ENCODE measurements at regions of chr12 and their contacts with region 1.

Region 1: DNA sequence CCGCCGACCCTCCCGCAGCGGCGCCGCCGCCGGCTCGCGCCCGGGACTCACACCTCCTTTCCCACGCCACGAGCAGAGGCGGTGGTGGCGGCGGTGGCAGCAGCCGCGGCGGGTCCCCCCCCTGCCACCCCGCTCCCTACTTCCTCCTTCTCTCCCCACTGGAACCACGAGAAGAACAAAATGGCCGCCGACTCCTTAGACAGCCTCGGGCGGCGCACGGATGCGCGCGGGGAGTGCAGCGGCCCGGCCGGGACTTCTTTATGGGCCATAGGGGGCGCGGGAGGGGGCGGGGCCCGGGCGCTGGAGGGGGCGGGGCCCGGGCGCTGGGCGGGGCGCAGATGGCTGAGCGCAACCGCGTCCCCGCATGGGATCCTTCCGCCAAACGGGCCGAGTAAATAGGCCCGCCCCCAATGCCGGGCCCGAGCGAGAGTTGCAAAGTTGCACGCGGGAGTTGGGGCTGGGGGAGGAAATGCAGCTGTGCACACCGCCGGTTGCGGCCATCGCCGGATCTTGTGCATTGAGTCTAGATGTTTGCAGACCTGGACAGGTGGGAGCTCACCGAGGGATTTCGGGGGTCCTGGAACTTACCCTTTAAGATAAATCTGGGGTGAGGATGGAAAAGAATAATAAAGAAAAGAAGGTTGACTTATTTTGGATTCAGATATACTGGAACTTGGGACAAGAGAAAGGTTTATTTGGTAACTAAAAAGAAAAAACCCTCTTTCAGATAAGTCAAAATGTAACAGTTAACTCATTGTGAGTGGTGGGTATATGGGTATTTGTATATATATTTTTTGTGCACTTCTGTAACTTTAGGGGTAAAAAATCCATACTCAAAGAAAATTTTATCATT is at the start of gene PPP1CC:
- DNase-seq: peak; percentile 90
- H3K4me3 ChIP-seq: peak within 1 kb of the TSS; percentile 94 to 97 (median 94)
- H3K27ac ChIP-seq: peak within 1 kb of the TSS; percentile 78
- H3K4me1 ChIP-seq: peaks cover 42% of the 10 kb centered on the region
- H3K27me3 ChIP-seq: no peaks in the 10 kb centered on the region
- CTCF ChIP-seq: no peak
- POLR2A ChIP-seq: peak; percentile 80
- total RNA-seq, gene PPP1CC: 139 and 140 TPM in 2 replicates

Region 2: GRCh38 chr12:110449799-110450497 is 293.0 kb before region 1 on chr12 and contains the start of gene ARPC3:
- CTCF ChIA-PET with region 1: no interaction called
- POLR2A ChIA-PET with region 1: no interaction called
- dilution Hi-C with region 1: no loop called
- intact Hi-C with region 1: loop called (anchors 5 kb)
- DNase-seq: peak; percentile 92
- H3K4me3 ChIP-seq: peak within 1 kb of the TSS; percentile 59 to 85 (median 83)
- H3K27ac ChIP-seq: peak within 1 kb of the TSS; percentile 89
- H3K4me1 ChIP-seq: peaks cover 5% of the 10 kb centered on the region
- H3K27me3 ChIP-seq: no peaks in the 10 kb centered on the region
- CTCF ChIP-seq: peak; percentile 87 to 89
- POLR2A ChIP-seq: peak; percentile 86
- total RNA-seq, gene ARPC3: 304 and 308 TPM in 2 replicates

Region 3: GRCh38 chr12:110501752-110502738 is 240.9 kb before region 1 on chr12 and contains the starts of genes RAD9B and VPS29:
- CTCF ChIA-PET with region 1: no interaction called
- POLR2A ChIA-PET with region 1: no interaction called
- dilution Hi-C with region 1: no loop called
- intact Hi-C with region 1: loop called (anchors 5 kb)
- DNase-seq: peak; percentile 99
- H3K4me3 ChIP-seq: peak within 1 kb of the TSS; percentile 58 to 94 (median 80)
- H3K27ac ChIP-seq: peak within 1 kb of the TSS; percentile 68
- H3K4me1 ChIP-seq: peaks cover 13% of the 10 kb centered on the region
- H3K27me3 ChIP-seq: no peaks in the 10 kb centered on the region
- CTCF ChIP-seq: no peak
- POLR2A ChIP-seq: peak; percentile 86
- total RNA-seq, gene RAD9B: 0.15 TPM in 1 of 2 replicates, not detected in the other
- total RNA-seq, gene VPS29: 147 and 155 TPM in 2 replicates

Region 4: DNA sequence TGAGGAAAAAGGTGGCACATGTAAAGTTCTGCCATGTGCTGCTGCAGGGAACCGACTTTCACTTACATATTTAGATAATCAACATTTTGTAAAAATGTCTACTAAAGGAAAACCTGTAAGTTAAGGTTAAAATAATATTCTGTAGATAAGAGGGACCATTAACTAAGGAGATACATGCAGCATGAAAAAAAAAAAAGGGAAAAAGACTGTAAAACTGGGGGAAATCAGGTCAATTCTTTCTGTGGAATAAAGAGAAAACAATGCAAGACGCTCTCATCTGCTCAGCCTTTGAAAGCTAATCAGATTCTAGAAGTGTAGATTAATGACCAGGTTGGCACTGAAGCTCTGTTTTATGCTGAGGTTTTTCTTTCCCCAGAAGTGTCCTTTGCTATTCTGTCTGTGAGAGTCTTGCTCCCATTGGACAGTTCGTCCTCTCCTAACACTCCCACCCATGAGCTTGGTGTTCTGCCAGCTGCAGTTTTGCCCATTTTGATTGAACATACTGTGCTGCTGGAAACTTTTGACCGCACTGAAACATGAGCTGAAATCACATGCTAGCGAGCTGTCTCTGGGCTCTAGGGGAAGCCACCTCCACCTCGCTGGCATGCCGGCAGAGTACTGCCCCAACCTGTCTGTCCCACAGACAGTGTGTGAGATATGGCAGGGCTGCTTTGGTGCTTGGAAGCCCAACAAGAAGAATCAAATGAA is 199.5 kb before region 1 on chr12:
- CTCF ChIA-PET with region 1: no interaction called
- POLR2A ChIA-PET with region 1: no interaction called
- dilution Hi-C with region 1: no loop called
- intact Hi-C with region 1: loop called (anchors 5 kb)
- DNase-seq: peak; percentile 88
- H3K4me3 ChIP-seq: no peak overlapping the region
- H3K27ac ChIP-seq: peak overlapping the region; percentile 25
- H3K4me1 ChIP-seq: peaks cover 61% of the 10 kb centered on the region
- H3K27me3 ChIP-seq: no peaks in the 10 kb centered on the region
- CTCF ChIP-seq: no peak
- POLR2A ChIP-seq: peak; percentile 22

Region 5: DNA sequence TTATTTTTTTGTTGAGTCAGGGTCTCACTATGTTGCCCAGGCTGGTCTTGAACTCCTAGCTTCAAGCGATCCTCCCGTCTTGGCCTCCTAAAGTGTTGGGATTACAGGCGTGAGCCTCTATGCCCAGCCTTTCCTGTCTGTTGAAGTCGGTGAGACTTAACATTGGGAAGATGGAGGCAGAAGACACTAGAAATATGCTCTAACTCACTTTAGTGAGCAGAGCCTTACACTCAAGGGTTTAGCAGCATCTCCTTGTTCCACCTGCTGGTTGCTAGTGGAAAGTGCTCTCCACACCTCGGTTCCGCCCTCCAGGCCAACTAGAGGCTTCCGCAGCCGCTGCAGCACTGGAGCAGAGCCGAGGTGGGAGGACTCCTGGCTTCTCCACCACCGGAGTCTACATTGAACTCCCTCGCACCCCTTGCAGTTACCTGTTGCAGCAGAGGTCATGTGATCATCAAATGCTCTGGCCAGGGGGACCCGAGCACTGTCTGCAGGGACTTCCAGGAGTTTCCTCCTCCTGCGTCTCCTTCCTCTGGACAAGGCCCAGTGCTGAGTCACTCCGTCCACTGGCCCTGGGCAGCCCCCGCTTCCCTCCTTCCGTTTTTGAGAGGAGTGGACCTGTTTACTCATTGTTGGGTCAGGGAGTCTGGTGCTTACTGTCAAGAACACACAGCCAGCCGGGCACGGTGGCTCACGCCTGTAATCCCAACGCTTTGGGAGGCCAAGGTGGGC is 44.6 kb before region 1 on chr12:
- CTCF ChIA-PET with region 1: no interaction called
- POLR2A ChIA-PET with region 1: no interaction called
- dilution Hi-C with region 1: no loop called
- intact Hi-C with region 1: loop called (anchors 1 kb)
- DNase-seq: peak; percentile 92
- H3K4me3 ChIP-seq: no peak overlapping the region
- H3K27ac ChIP-seq: peak overlapping the region; percentile 36
- H3K4me1 ChIP-seq: peaks cover 5% of the 10 kb centered on the region
- H3K27me3 ChIP-seq: no peaks in the 10 kb centered on the region
- CTCF ChIP-seq: peak; percentile 67 to 81
- POLR2A ChIP-seq: peak; percentile 24

Region 6: GRCh38 chr12:110826592-110827200 is 83.8 kb after region 1 on chr12:
- CTCF ChIA-PET with region 1: interaction called, 3 read pairs
- POLR2A ChIA-PET with region 1: no interaction called
- dilution Hi-C with region 1: no loop called
- intact Hi-C with region 1: loop called (anchors 1 kb)
- DNase-seq: peak; percentile 74
- H3K4me3 ChIP-seq: no peak overlapping the region
- H3K27ac ChIP-seq: no peak overlapping the region
- H3K4me1 ChIP-seq: no peaks in the 10 kb centered on the region
- H3K27me3 ChIP-seq: no peaks in the 10 kb centered on the region
- CTCF ChIP-seq: peak; percentile 74 to 77
- POLR2A ChIP-seq: no peak

Region 7: DNA sequence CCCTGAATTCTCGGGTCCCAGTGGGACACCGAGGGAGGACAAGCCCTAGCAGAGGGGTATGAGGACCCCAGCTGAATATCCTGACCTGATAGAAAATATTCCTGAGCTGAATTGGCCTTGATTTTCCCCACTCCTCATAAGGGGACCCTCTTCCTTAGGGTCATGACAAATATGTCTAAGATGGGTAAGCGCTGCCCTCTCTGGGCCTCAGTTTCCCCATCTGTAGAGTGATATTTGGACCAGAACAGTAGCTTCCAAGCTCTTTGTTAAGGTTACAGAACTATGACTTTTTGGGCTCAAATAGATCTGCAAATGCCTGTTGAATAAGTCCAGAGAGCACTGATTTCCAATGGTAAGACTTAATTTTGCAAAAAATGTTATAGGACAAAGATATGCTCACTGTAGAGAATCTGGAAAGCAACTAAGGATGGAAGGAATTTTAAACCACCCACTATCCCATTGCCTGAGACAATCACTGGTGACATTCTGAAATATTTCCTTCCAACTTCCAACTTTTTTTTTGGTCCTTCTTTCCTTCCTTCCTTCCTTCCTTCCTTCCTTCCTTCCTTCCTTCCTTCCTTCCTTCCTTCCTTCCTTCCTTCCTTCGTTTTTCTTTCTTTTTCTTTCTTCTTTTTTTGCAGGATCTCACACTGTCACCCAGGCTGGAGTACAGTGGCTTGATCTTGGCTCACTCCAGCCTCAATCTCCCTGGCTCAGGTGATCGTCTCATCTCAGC is 145.5 kb after region 1 on chr12:
- CTCF ChIA-PET with region 1: interaction called, 8 read pairs
- POLR2A ChIA-PET with region 1: no interaction called
- dilution Hi-C with region 1: no loop called
- intact Hi-C with region 1: loop called (anchors 1 kb)
- DNase-seq: no peak
- H3K4me3 ChIP-seq: no peak overlapping the region
- H3K27ac ChIP-seq: no peak overlapping the region
- H3K4me1 ChIP-seq: peaks cover 5% of the 10 kb centered on the region
- H3K27me3 ChIP-seq: peaks cover 0 to 3% of the 10 kb centered on the region in 2 experiments
- CTCF ChIP-seq: no peak
- POLR2A ChIP-seq: no peak